H1 (cell line): ENCODE measurements at regions of chr5 and their contacts with region 1.

Region 1: DNA sequence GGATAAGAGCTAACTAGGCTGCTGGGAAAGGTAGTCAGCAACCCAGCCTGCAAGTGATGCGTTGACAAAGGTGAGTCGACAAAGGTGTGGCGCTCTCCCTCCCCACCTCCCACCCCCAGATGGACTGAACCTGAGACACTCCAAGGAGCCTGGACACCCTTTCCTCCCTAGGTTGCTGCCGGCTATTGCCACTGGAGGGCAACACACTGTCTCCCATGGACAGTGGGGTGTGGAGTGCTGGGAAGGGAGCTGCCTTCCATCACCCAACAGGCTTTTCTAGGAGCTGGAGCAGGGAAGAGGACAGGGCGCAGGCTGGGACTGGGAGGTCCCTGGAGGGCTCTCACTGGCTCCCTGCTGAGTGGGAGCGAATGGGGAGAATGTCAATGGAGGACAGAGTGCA is 75.4 kb upstream of the ARAP3 start:
- DNase-seq: peak in 1 of 2 experiments; percentile 29
- H3K4me3 ChIP-seq: no peak overlapping the region
- H3K27ac ChIP-seq: no peak overlapping the region
- H3K4me1 ChIP-seq: peaks cover 17 to 30% (median 26%) of the 10 kb centered on the region in 4 experiments
- H3K27me3 ChIP-seq: peaks cover 9 to 22% (median 18%) of the 10 kb centered on the region in 4 experiments
- CTCF ChIP-seq: peak in 2 of 3 experiments; percentile 78 to 79; a peak in 3 of 4 replicates
- EP300 ChIP-seq: no peak
- POLR2A ChIP-seq: no peak
- RAD21 ChIP-seq: peak; percentile 76 to 86

Region 2: GRCh38 chr5:141713616-141714309 is 43.6 kb before region 1 on chr5:
- CTCF ChIA-PET with region 1: interaction called, 11 read pairs
- POLR2A ChIA-PET with region 1: no interaction called
- DNase-seq: no peak
- H3K4me3 ChIP-seq: no peak overlapping the region
- H3K27ac ChIP-seq: no peak overlapping the region
- H3K4me1 ChIP-seq: peaks cover 3 to 20% (median 11%) of the 10 kb centered on the region in 4 experiments
- H3K27me3 ChIP-seq: no peaks in the 10 kb centered on the region
- CTCF ChIP-seq: no peak
- EP300 ChIP-seq: no peak
- POLR2A ChIP-seq: no peak
- RAD21 ChIP-seq: no peak

Region 3: GRCh38 chr5:141771031-141771430 is 13.6 kb after region 1 on chr5:
- CTCF ChIA-PET with region 1: interaction called, 54 read pairs
- POLR2A ChIA-PET with region 1: interaction called, 11 read pairs
- DNase-seq: no peak
- H3K4me3 ChIP-seq: no peak overlapping the region
- H3K27ac ChIP-seq: no peak overlapping the region
- H3K4me1 ChIP-seq: peaks cover 0 to 7% (median 3%) of the 10 kb centered on the region in 4 experiments; a peak in 5 of 7 replicates
- H3K27me3 ChIP-seq: no peaks in the 10 kb centered on the region; a peak in 1 of 7 replicates
- CTCF ChIP-seq: no peak
- EP300 ChIP-seq: no peak
- POLR2A ChIP-seq: no peak
- RAD21 ChIP-seq: no peak

Region 4: GRCh38 chr5:141805874-141806595 is 48.6 kb after region 1 on chr5:
- CTCF ChIA-PET with region 1: interaction called, 179 read pairs
- POLR2A ChIA-PET with region 1: interaction called, 9 read pairs
- DNase-seq: no peak
- H3K4me3 ChIP-seq: no peak overlapping the region
- H3K27ac ChIP-seq: no peak overlapping the region
- H3K4me1 ChIP-seq: peaks cover 11 to 39% (median 17%) of the 10 kb centered on the region in 4 experiments
- H3K27me3 ChIP-seq: no peaks in the 10 kb centered on the region; a peak in 1 of 7 replicates
- CTCF ChIP-seq: no peak
- EP300 ChIP-seq: no peak
- POLR2A ChIP-seq: no peak
- RAD21 ChIP-seq: no peak